Naive thymus-derived CD4-positive, alpha-beta T cell (primary cell): ENCODE measurements at regions of chr16 and their contacts with region 1.

Region 1: DNA sequence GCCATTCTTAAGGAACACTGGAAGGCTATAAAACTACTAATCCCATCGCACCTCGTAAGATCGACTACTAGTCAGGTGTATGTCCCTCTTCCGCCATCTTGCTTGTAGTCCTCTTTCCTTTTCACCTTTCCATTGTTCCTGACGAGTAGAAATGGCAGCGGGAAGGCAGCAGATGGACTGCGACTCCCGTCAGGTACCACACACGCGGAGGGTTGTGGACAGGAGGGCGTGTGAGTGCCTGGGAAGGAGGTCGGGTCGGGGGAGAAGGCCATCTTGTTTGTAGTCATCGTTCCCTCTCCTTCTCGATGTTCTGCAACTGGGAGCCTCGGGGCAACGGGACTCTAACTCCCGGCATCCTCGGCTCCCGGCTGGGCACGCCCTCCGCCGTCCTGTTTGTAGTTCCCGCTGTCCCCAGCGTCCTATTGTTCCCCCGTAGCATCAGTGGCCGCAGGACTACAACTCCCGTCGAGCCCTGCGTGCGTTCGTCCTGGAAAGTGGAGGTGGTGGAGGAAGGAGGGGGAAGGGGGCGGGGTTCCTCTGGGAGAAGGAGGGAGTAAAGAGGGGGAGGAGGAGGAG is 324 bp upstream of the FBXL19 start:
- DNase-seq: peak; percentile 74 to 97 (median 95)
- ATAC-seq: peak; percentile 79
- H3K4me3 ChIP-seq: peak overlapping the region; percentile 72
- H3K4me3 Mint-ChIP-seq: peak overlapping the region; percentile 89 to 100 (median 99)
- H3K27ac ChIP-seq: peak overlapping the region; percentile 91
- H3K27ac Mint-ChIP-seq: peak overlapping the region; percentile 92 to 100 (median 99)
- H3K4me1 ChIP-seq: no peaks in the 10 kb centered on the region
- H3K4me1 Mint-ChIP-seq: peaks cover 0 to 32% (median 15%) of the 10 kb centered on the region in 7 donors
- H3K27me3 ChIP-seq: no peaks in the 10 kb centered on the region
- H3K27me3 Mint-ChIP-seq: peaks cover 0 to 3% (median 0%) of the 10 kb centered on the region in 5 donors

Region 2: DNA sequence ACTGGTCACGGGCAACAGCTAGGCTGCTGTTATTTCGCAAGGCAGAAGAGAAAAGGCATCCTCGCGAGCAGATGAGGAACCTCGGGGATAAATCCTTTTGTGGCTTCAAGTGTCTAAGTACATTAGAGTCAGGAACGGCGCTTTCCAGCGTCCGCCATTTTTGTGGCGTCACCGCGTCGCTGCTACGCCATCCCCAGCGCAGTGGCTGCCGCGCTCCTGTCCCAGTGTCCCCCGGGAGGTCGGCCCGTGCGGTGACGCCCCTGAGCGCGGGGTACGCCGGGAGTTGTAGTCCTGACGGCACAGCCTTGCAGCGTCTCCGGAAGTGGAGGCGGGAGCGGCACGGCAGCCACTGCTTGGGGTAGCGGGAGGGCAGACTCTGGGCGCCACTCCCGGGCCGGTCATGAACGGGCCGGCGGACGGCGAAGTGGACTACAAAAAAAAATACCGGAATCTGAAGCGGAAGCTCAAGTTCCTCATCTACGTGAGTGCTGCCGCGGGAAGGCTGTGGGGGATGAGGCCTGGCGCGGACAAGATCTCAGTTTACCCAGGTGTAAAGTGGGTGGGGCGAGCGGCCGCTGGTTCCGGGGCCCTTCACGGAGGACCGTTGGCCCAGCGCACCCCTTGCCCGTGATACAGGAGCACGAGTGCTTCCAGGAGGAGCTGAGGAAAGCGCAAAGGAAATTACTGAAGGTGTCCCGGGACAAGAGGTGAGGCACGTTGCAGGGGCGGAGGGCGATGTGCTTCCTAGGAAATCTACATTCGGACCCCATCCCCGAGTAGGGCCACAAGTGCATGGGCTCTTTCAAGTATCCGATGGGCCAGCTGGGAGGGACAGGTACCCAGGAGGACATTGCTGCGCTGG is 926.9 kb before region 1 on chr16 and contains the start of gene INO80E:
- CTCF ChIA-PET with region 1: no interaction called
- POLR2A ChIA-PET with region 1: no interaction called
- intact Hi-C with region 1: loop called (anchors 2 to 5 kb)
- DNase-seq: peak; percentile 94 to 99 (median 98)
- ATAC-seq: peak; percentile 99
- H3K4me3 ChIP-seq: peak within 1 kb of the TSS; percentile 100
- H3K4me3 Mint-ChIP-seq: peak within 1 kb of the TSS; percentile 86 to 99 (median 98)
- H3K27ac ChIP-seq: peak within 1 kb of the TSS; percentile 99
- H3K27ac Mint-ChIP-seq: peak within 1 kb of the TSS; percentile 93 to 99 (median 97)
- H3K4me1 ChIP-seq: peaks cover 16 to 18% of the 10 kb centered on the region in 2 donors
- H3K4me1 Mint-ChIP-seq: peaks cover 24 to 53% (median 38%) of the 10 kb centered on the region in 7 donors
- H3K27me3 ChIP-seq: no peaks in the 10 kb centered on the region
- H3K27me3 Mint-ChIP-seq: no peaks in the 10 kb centered on the region
- total RNA-seq, gene INO80E: 71.7 to 141 (median 95.8) TPM

Region 3: DNA sequence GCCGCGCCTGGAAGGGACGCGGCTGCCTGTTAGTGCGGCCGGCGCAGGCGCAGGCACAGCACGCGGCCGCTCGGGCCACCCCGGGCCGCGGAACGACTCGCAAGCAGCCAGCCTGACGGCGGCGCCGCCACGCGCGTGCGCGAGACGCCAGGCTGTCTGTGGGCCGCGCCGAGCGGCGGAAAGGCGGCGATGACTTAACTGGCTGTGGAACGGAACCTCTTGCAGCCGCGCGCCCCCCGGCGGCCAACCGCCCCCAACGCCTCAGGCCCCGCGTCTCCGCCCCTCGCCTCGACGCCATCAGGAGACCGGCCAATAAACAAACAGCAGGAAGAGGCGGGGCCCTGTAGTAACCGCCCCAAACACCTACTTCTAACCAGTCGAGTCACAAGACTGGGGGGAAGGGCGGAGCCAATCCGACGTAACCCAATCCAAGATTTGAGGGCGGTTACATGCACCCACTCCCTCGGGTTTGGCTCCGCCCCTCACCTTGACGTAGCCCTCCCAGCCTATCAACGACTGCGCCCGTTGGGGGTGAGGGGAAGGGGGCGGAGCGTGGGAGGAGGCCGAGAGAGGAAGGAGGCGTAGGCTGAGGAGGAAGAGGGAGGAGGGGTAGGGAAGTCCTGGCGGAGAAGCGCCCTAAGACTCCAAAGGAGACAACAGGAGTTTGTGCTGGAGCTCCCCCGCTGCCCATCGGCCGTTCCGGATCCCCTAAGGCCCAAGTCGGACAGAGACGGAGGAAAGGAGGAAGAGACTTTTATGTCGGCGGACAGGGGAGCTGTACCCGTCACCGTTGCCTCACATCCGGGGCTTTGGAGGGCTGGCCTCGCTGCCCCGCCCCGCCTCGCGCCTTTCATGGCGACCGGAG is 264.9 kb before region 1 on chr16 and contains the start of gene FBRS:
- CTCF ChIA-PET with region 1: no interaction called
- POLR2A ChIA-PET with region 1: no interaction called
- intact Hi-C with region 1: loop called (anchors 1 kb)
- DNase-seq: peak; percentile 98 to 100 (median 100)
- ATAC-seq: peak; percentile 84
- H3K4me3 ChIP-seq: peak within 1 kb of the TSS; percentile 83
- H3K4me3 Mint-ChIP-seq: peak within 1 kb of the TSS; percentile 81 to 99 (median 96)
- H3K27ac ChIP-seq: peak within 1 kb of the TSS; percentile 94
- H3K27ac Mint-ChIP-seq: peak within 1 kb of the TSS; percentile 99 to 100 (median 100)
- H3K4me1 ChIP-seq: peaks cover 38 to 42% of the 10 kb centered on the region in 2 donors
- H3K4me1 Mint-ChIP-seq: peaks cover 19 to 50% (median 40%) of the 10 kb centered on the region in 7 donors
- H3K27me3 ChIP-seq: no peaks in the 10 kb centered on the region
- H3K27me3 Mint-ChIP-seq: no peaks in the 10 kb centered on the region
- total RNA-seq, gene FBRS: 143 to 174 (median 164) TPM

Region 4: GRCh38 chr16:30813821-30814189 is 109.2 kb before region 1 on chr16:
- CTCF ChIA-PET with region 1: no interaction called
- POLR2A ChIA-PET with region 1: no interaction called
- intact Hi-C with region 1: loop called (anchors 1 kb)
- DNase-seq: no peak
- ATAC-seq: no peak
- H3K4me3 ChIP-seq: peak overlapping the region; percentile 70
- H3K4me3 Mint-ChIP-seq: peak overlapping the region; percentile 84 to 92 (median 86)
- H3K27ac ChIP-seq: peak overlapping the region; percentile 73
- H3K27ac Mint-ChIP-seq: peak overlapping the region; percentile 61 to 98 (median 88)
- H3K4me1 ChIP-seq: peaks cover 7% of the 10 kb centered on the region in 2 donors
- H3K4me1 Mint-ChIP-seq: peaks cover 5 to 15% (median 13%) of the 10 kb centered on the region in 7 donors
- H3K27me3 ChIP-seq: no peaks in the 10 kb centered on the region
- H3K27me3 Mint-ChIP-seq: peaks cover 0 to 3% (median 0%) of the 10 kb centered on the region in 5 donors

Region 5: DNA sequence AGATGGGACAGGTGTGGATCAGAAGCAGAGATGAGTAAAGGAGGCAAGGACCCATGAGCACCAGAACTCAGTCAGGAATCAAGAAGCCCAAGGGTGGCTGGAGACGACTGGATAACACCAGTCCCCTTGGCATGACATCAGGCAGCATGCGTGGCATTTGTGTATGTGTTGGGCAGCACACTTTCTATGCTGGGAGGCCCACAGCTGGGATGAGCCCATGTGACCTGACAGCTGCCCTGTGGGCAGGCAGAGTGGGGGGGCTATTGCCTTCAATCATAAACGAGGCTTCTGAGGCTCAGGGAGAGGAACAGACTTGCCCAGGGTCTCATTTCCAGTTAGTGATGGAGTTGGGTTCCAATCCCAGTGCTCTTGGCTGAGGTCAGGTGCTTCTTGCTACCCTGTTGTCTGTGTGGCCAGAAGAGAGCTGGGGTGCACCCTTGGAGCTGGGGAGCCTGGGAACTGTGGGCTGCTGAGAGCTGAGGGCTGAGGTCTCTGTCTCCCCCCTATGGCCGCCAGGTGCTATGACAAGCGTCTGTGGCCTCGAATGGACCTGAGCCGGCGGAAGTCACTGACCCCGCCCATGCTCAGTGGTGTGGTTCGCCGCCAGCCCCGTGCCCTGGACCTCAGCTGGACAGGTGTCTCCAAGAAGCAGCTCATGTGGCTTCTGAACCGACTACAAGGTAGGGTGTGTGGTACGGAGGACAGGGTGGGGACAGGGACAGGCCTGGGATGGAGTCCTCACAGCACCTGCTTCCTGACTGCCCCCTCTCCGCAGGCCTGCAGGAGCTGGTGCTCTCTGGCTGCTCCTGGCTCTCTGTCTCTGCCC is 18.8 kb after region 1 on chr16:
- CTCF ChIA-PET with region 1: no interaction called
- POLR2A ChIA-PET with region 1: interaction called, 3 read pairs
- intact Hi-C with region 1: loop called in 1 of 2 experiments (anchors 1 kb)
- DNase-seq: peak; percentile 33 to 76 (median 44)
- ATAC-seq: peak; percentile 99
- H3K4me3 ChIP-seq: no peak overlapping the region
- H3K4me3 Mint-ChIP-seq: peak overlapping the region in 2 of 10 donors; percentile 32 to 69
- H3K27ac ChIP-seq: no peak overlapping the region
- H3K27ac Mint-ChIP-seq: peak overlapping the region in 5 of 9 donors; percentile 15 to 59 (median 55)
- H3K4me1 ChIP-seq: peaks cover 5 to 8% of the 10 kb centered on the region in 2 donors
- H3K4me1 Mint-ChIP-seq: peaks cover 5 to 32% (median 13%) of the 10 kb centered on the region in 7 donors
- H3K27me3 ChIP-seq: no peaks in the 10 kb centered on the region
- H3K27me3 Mint-ChIP-seq: no peaks in the 10 kb centered on the region

Region 6: GRCh38 chr16:31094424-31095120 is 171.5 kb after region 1 on chr16 and contains the start of gene VKORC1:
- CTCF ChIA-PET with region 1: no interaction called
- POLR2A ChIA-PET with region 1: no interaction called
- intact Hi-C with region 1: loop called in 1 of 2 experiments (anchors 1 kb)
- DNase-seq: peak; percentile 66 to 89 (median 88)
- ATAC-seq: peak; percentile 93
- H3K4me3 ChIP-seq: peak within 1 kb of the TSS; percentile 99
- H3K4me3 Mint-ChIP-seq: peak within 1 kb of the TSS; percentile 92 to 99 (median 94)
- H3K27ac ChIP-seq: peak within 1 kb of the TSS; percentile 85
- H3K27ac Mint-ChIP-seq: peak within 1 kb of the TSS; percentile 67 to 95 (median 91)
- H3K4me1 ChIP-seq: peaks cover 14 to 18% of the 10 kb centered on the region in 2 donors
- H3K4me1 Mint-ChIP-seq: peaks cover 14 to 42% (median 29%) of the 10 kb centered on the region in 7 donors
- H3K27me3 ChIP-seq: no peaks in the 10 kb centered on the region
- H3K27me3 Mint-ChIP-seq: no peaks in the 10 kb centered on the region
- total RNA-seq, gene VKORC1: 29.5 to 69.3 (median 35.6) TPM

Region 7: GRCh38 chr16:31868691-31869167 is 945.7 kb after region 1 on chr16:
- CTCF ChIA-PET with region 1: no interaction called
- POLR2A ChIA-PET with region 1: no interaction called
- intact Hi-C with region 1: loop called in 1 of 2 experiments (anchors 5 kb)
- DNase-seq: peak; percentile 62 to 81 (median 74)
- ATAC-seq: peak; percentile 20
- H3K4me3 ChIP-seq: peak overlapping the region; percentile 42
- H3K4me3 Mint-ChIP-seq: peak overlapping the region; percentile 67 to 86 (median 74)
- H3K27ac ChIP-seq: peak overlapping the region; percentile 60
- H3K27ac Mint-ChIP-seq: peak overlapping the region; percentile 8 to 95 (median 85)
- H3K4me1 ChIP-seq: peaks cover 32 to 36% of the 10 kb centered on the region in 2 donors
- H3K4me1 Mint-ChIP-seq: peaks cover 27 to 65% (median 50%) of the 10 kb centered on the region in 7 donors
- H3K27me3 ChIP-seq: no peaks in the 10 kb centered on the region
- H3K27me3 Mint-ChIP-seq: peaks cover 0 to 5% (median 0%) of the 10 kb centered on the region in 5 donors